MCF 10A (cell line): ENCODE measurements at regions of chr12 and their contacts with region 1.

Region 1: DNA sequence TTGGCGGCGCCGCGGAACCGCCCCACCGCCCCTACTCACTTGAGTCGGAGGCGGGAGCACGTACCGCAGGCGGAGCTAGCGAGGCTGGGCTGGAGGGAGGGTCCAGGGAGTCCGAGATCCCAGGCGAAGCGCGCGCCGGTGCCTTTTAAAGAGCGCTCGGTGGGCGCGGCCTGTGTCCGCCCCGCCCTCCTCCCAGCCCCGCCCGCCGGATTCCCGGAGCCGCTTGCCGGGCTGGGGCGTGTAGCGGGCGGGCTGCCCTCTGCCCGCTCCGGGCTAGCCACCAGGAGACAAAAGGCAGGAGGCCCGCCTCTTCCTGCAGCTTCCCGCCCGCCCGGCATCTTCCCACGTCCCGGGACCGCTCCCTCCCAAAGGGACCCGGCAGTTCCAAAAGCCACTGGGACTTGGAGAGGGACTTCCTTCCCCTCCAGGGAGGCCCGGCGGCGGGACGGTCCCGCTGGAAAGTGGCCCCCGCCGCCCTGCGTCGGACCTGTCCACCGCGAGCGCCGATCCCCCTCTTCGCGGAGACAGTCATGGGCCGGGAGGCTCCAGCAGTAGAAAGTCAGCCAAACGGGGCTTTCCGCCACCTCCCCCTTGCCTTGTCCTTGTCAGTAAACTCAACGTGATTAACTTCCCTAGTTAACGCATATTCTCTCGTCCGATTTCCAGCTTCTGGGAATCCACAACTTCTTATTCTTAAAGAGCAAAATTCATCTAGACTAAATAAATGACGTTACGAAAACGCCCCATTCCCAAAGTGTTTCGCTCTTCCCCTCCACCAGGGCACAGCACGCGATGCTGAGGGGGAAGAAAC is at the start of gene CSRP2:
- DNase-seq: peak; percentile 91
- H3K4me3 Mint-ChIP-seq: peak within 1 kb of the TSS; percentile 98
- H3K27ac Mint-ChIP-seq: peak within 1 kb of the TSS; percentile 49
- H3K4me1 Mint-ChIP-seq: peaks cover 15% of the 10 kb centered on the region
- H3K27me3 Mint-ChIP-seq: no peaks in the 10 kb centered on the region
- CTCF ChIP-seq: no peak
- total RNA-seq, gene CSRP2: 2.0 and 2.6 TPM in 2 replicates

Region 2: GRCh38 chr12:76848132-76848531 is 31.0 kb before region 1 on chr12:
- CTCF ChIA-PET with region 1: no interaction called
- POLR2A ChIA-PET with region 1: no interaction called
- intact Hi-C with region 1: no loop called
- DNase-seq: no peak
- H3K4me3 Mint-ChIP-seq: no peak overlapping the region
- H3K27ac Mint-ChIP-seq: no peak overlapping the region
- H3K4me1 Mint-ChIP-seq: no peaks in the 10 kb centered on the region
- H3K27me3 Mint-ChIP-seq: no peaks in the 10 kb centered on the region
- CTCF ChIP-seq: no peak

Region 3: DNA sequence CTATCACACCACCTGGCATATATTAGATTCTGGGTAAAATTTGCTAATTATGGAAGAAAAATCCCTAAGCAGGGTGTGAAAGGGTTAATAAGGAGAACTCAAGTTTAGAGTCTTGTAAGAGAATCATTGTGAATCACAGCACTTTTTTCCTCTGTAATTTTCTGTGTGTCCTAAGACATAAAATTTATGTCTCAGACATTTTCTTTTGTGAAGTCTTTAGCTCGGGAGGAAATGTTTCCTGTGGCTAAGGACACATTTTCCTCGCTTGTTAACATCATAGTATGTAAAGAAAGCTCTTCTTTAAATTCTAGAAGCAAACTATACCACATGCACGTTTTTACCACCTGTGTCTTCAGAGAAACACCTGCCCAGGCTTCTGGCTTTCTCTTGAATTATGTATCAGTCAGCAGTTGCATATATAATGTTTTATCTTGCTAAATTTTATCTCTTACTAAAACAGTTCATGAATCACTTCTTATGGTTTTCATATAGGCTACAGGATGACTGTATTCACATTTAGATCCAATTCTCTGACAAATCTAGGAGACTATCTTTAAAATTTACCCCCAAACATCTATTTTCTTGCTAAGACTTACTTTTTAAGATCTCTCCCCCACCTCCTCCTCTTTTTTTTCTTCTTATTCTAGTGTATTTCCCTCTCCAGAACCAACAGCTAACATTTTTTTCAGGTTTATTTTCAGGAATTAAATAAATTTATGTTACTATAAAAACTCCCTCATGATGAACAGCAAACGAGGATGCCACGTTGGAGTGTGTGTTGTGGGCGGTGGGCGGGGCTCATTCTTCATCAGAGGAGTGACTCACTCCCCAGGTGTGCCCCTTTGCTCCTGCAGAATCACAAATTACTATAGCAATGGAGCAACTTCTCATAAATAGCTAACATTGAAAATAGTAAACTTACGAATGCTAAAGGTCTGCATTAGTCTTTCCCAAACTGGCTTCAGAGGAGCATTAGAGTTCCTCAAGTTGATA is 11.3 kb after region 1 on chr12:
- CTCF ChIA-PET with region 1: interaction called, 4 read pairs
- POLR2A ChIA-PET with region 1: interaction called, 15 read pairs
- intact Hi-C with region 1: no loop called
- DNase-seq: peak; percentile 62
- H3K4me3 Mint-ChIP-seq: no peak overlapping the region
- H3K27ac Mint-ChIP-seq: peak overlapping the region; percentile 64
- H3K4me1 Mint-ChIP-seq: peaks cover 9% of the 10 kb centered on the region
- H3K27me3 Mint-ChIP-seq: no peaks in the 10 kb centered on the region
- CTCF ChIP-seq: no peak

Region 4: DNA sequence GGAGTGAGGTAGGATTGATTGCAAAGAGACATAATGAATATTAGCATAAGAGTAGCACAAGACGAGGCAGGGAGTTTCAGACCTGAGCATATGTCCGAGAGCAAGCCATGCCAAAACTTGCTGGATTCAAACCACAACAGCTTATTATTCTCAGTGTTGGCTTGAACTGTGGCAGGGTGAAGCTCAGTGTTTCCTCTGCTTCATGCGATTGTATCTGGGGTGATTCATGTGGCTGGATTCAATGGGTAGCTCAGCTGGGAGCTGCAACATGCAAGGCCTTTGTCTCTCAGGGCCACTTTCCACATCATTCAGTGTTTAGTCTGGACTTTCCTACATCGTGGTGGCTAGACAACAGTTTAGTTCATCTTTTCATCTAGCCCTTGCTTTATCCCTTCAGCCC is 208.3 kb after region 1 on chr12:
- CTCF ChIA-PET with region 1: no interaction called
- POLR2A ChIA-PET with region 1: no interaction called
- intact Hi-C with region 1: no loop called
- DNase-seq: no peak
- H3K4me3 Mint-ChIP-seq: no peak overlapping the region
- H3K27ac Mint-ChIP-seq: no peak overlapping the region
- H3K4me1 Mint-ChIP-seq: no peaks in the 10 kb centered on the region
- H3K27me3 Mint-ChIP-seq: no peaks in the 10 kb centered on the region
- CTCF ChIP-seq: no peak